ENCODE measurements at regions of chr1 and their contacts with region 1.

Region 1: DNA sequence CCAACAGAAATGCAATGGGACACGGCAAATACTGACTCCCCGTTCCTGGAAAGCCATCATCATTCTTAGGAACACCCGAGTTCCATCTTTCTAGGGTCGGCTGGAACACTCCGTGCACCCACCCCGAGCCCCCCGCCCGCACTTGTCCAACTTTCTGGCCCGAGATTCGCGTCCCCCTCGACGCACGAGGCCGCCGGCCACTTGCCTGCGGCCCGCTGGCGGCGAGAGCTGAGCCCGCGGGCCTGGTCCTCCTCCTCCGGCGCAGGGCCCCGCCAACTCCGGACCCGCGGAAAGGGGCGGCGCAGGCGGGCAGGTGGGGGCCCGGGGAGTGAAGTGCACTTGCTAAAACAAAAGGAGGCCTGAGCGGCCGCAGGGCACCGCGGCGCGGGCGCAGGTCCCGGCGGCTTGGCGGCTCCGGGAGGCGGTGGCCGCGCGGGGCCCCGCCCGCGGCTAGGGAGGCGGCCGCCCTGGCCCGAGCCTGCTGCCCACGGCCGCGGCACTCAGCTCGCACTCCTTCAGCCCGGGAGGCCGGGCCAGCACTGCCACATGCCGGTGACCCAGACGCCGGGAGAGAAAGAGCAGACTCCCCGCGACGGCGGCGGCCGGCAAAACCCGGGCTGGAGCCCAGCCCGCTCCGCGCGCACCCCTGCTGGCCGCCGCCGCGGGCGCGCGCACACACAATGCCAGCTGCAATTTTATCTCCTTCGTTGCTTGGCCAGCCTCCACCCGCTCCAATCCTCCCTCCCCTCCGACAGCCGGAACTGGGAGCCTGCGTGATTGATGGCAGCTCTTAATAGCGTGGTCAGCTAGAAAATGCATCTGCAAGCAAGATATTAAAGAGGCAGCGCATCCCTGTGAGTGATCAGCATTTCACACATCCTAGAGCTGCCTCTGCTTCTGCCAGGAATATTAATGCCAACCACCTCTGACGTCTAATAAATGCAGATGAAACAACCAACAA is 114.3 kb downstream of the RERE start:
- DNase-seq: peak; percentile 76 to 87 (median 84)
- H3K4me3 ChIP-seq: peak overlapping the region; percentile 50 to 87 (median 74)
- H3K27ac ChIP-seq: peak overlapping the region; percentile 21 to 69
- H3K4me1 ChIP-seq: peaks cover 23 to 55% (median 40%) of the 10 kb centered on the region in 4 experiments
- H3K27me3 ChIP-seq: no peaks in the 10 kb centered on the region

Region 2: DNA sequence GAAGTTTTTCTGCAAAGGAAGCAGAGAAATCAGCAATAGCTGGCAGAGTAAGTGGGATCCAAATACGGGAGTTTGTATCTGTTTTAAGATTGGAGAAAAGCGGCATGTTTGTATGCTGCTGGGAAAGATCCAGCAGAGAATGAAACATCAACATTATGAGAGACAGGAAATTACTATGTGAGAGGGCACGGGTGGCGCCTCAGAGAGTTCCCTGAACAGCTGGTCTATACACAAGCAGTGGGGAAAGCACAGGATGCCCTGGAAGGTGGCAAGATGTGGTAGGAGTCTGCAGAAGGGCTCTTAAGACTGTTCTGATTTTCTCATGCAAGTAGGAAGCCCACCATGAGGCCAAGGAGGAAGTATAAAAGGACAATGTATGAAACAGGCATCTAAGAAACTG is 16.1 kb before region 1 on chr1:
- CTCF ChIA-PET with region 1: interaction called, 16 read pairs
- POLR2A ChIA-PET with region 1: interaction called, 3 read pairs
- DNase-seq: peak in 2 of 3 donors; percentile 78 to 82
- H3K4me3 ChIP-seq: peak overlapping the region in 2 of 7 experiments; percentile 28 to 39
- H3K27ac ChIP-seq: peak overlapping the region in 1 of 2 experiments; percentile 16
- H3K4me1 ChIP-seq: peaks cover 5 to 34% (median 16%) of the 10 kb centered on the region in 4 experiments
- H3K27me3 ChIP-seq: no peaks in the 10 kb centered on the region

Region 3: GRCh38 chr1:8718850-8719361 is 15.8 kb after region 1 on chr1:
- CTCF ChIA-PET with region 1: interaction called, 10 read pairs
- POLR2A ChIA-PET with region 1: interaction called, 3 read pairs
- DNase-seq: no peak
- H3K4me3 ChIP-seq: no peak overlapping the region
- H3K27ac ChIP-seq: no peak overlapping the region
- H3K4me1 ChIP-seq: peaks cover 14 to 74% (median 23%) of the 10 kb centered on the region in 4 experiments
- H3K27me3 ChIP-seq: no peaks in the 10 kb centered on the region

Region 4: DNA sequence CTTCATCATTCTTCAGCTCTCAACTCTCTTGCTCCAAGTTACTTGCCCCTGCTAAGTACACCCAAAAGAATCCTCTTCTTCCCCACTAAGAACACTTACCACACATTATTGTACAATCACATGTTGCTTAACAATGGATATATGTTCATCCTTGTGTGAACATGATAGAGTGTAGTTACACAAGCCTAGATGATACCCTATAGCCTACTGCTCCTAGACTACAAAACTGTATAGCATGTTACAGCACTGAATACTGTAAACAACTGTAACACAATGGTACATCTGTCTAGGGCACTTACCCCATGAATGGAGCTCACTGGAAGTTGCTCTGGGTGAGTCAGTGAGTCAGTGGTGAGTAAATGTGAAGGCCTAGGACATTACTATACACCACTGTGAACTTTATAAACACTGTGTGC is 36.9 kb after region 1 on chr1:
- CTCF ChIA-PET with region 1: no interaction called
- POLR2A ChIA-PET with region 1: no interaction called
- DNase-seq: no peak
- H3K4me3 ChIP-seq: no peak overlapping the region
- H3K27ac ChIP-seq: no peak overlapping the region
- H3K4me1 ChIP-seq: peaks cover 0 to 6% (median 5%) of the 10 kb centered on the region in 4 experiments
- H3K27me3 ChIP-seq: no peaks in the 10 kb centered on the region

Measured in common myeloid progenitor, CD34-positive (primary cell).